H1 (cell line): ENCODE measurements at regions of chr17 and their contacts with region 1.

Region 1: GRCh38 chr17:4554997-4555799 is at the start of gene MYBBP1A:
- DNase-seq: peak; percentile 84 to 96
- H3K4me3 ChIP-seq: peak within 1 kb of the TSS; percentile 73 to 94 (median 84)
- H3K27ac ChIP-seq: peak within 1 kb of the TSS; percentile 74; the same call in 1 of the 2 replicates
- H3K4me1 ChIP-seq: peaks cover 6 to 17% (median 10%) of the 10 kb centered on the region in 4 experiments; a peak in 6 of 7 replicates
- H3K27me3 ChIP-seq: no peaks in the 10 kb centered on the region
- CTCF ChIP-seq: peak in 2 of 3 experiments; percentile 15 to 44; a peak in 3 of 4 replicates
- EP300 ChIP-seq: no peak
- POLR2A ChIP-seq: peak in 1 of 2 experiments; percentile 78; a peak in 2 of 3 replicates
- RAD21 ChIP-seq: no peak
- total RNA-seq, gene MYBBP1A: 151 and 153 TPM in 2 replicates

Region 2: DNA sequence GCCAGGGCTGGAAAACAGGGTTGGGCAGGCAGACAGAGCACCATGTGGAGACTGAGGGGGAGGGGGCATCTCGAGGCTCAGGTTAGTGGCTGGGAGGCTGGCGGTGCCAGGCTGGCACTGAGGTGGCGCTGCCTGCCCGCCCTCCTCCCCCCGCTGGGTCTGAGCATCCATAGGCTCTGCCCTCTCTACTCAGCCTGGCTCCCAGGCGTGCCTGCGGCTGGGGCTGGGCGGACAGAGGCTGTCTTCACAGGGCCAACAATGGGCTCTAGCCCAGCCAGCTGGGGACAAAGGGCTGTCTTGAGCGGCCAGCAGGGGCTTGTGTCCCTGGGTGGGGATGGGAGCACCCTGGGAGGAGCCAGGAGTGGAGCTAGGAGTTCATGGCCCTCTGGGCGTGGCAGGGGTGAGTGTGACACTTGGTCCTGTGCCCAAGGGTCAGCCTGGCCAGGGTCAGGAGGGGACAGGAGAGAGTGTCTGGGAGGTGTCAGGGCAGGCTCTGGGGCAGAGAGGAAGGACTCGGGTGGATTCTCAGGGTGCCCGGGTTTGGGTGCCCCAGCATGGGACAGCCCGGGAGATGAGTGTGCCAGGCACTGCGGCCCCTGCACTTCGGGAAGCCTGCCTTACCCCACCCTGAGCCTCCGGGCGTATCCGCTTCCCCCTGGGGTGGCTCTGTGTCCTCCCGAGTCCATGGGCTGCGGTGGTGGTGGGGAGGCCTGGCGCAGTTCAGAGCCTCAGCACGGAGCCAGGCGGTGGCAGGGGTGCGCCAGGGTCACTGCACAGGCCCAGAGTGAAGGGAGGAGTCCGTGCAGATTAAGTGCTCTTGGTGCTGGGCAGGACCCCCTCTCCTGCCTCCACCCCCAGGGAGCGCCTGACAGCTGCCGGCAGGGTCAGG is 20.9 kb before region 1 on chr17:
- CTCF ChIA-PET with region 1: interaction called, 15 read pairs
- POLR2A ChIA-PET with region 1: interaction called, 546 read pairs
- DNase-seq: no peak
- H3K4me3 ChIP-seq: no peak overlapping the region
- H3K27ac ChIP-seq: no peak overlapping the region
- H3K4me1 ChIP-seq: peaks cover 0 to 29% (median 16%) of the 10 kb centered on the region in 4 experiments; a peak in 6 of 7 replicates
- H3K27me3 ChIP-seq: peaks cover 0 to 36% (median 21%) of the 10 kb centered on the region in 4 experiments; a peak in 4 of 7 replicates
- CTCF ChIP-seq: no peak
- EP300 ChIP-seq: no peak
- POLR2A ChIP-seq: 0 out of 3 replicates have a peak, but pooled peaks of 1 of the 2 experiments have one; percentile 2
- RAD21 ChIP-seq: no peak

Region 3: GRCh38 chr17:4540224-4540641 is 15.0 kb before region 1 on chr17:
- CTCF ChIA-PET with region 1: interaction called, 15 read pairs
- POLR2A ChIA-PET with region 1: interaction called, 546 read pairs
- DNase-seq: no peak
- H3K4me3 ChIP-seq: no peak overlapping the region
- H3K27ac ChIP-seq: no peak overlapping the region
- H3K4me1 ChIP-seq: peaks cover 0 to 19% (median 14%) of the 10 kb centered on the region in 4 experiments; a peak in 6 of 7 replicates
- H3K27me3 ChIP-seq: peaks cover 0 to 4% (median 0%) of the 10 kb centered on the region in 4 experiments; a peak in 2 of 7 replicates
- CTCF ChIP-seq: peak; percentile 46 to 96 (median 56)
- EP300 ChIP-seq: no peak
- POLR2A ChIP-seq: no peak
- RAD21 ChIP-seq: peak; percentile 28 to 50

Region 4: GRCh38 chr17:4625181-4625617 is 70.0 kb after region 1 on chr17:
- CTCF ChIA-PET with region 1: interaction called, 32 read pairs
- POLR2A ChIA-PET with region 1: interaction called, 10 read pairs
- DNase-seq: no peak
- H3K4me3 ChIP-seq: no peak overlapping the region
- H3K27ac ChIP-seq: no peak overlapping the region
- H3K4me1 ChIP-seq: no peaks in the 10 kb centered on the region; a peak in 1 of 7 replicates
- H3K27me3 ChIP-seq: 0 out of 7 replicates have a peak, but pooled peaks cover 0 to 2% (median 0%) of the 10 kb centered on the region in 4 experiments
- CTCF ChIP-seq: no peak
- EP300 ChIP-seq: no peak
- POLR2A ChIP-seq: no peak
- RAD21 ChIP-seq: no peak

Region 5: DNA sequence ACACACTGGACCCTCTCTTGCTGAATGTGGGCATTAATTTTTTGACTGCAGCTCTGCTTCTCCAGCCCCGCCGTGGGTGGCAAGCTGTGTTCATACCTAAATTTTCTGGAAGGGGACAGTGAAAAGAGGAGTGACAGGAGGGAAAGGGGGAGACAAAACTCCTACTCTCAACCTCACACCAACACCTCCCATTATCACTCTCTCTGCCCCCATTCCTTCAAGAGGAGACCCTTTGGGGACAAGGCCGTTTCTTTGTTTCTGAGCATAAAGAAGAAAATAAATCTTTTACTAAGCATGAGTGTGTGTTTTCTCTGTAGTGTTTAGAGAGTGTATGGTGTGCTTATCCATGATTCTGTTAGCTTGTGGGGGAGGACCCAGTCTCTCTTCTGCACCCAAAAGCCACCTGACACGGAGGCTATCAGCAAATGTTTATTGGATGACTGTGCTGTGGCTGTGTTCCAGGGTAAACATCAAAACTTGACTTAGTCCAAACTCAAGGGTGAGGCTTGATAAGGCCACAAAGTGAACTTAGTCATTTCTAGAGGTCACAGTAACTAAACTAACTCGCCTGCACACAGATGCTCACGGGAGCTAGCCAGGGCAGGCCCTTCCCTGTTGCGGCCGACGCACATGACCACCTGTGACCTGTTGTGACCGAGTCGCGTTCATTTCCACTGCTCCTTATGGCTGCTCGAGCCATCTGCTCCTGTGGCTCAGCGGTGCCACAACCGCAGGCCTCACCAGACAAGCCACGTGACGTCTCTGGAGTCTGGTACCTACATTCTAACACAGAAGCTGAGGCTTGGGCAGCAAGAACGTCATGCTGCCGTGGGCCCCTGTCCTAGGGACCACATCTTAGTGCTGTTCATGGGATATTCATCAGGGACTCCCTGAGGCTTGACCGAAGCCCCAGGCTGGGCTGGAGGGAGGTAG is 166.3 kb after region 1 on chr17:
- CTCF ChIA-PET with region 1: no interaction called
- POLR2A ChIA-PET with region 1: no interaction called
- DNase-seq: no peak
- H3K4me3 ChIP-seq: no peak overlapping the region
- H3K27ac ChIP-seq: no peak overlapping the region
- H3K4me1 ChIP-seq: no peaks in the 10 kb centered on the region
- H3K27me3 ChIP-seq: no peaks in the 10 kb centered on the region
- CTCF ChIP-seq: no peak
- EP300 ChIP-seq: no peak
- POLR2A ChIP-seq: no peak
- RAD21 ChIP-seq: no peak